GM12878 (cell line): ENCODE measurements at regions of chr20 and their contacts with region 1.

Region 1: DNA sequence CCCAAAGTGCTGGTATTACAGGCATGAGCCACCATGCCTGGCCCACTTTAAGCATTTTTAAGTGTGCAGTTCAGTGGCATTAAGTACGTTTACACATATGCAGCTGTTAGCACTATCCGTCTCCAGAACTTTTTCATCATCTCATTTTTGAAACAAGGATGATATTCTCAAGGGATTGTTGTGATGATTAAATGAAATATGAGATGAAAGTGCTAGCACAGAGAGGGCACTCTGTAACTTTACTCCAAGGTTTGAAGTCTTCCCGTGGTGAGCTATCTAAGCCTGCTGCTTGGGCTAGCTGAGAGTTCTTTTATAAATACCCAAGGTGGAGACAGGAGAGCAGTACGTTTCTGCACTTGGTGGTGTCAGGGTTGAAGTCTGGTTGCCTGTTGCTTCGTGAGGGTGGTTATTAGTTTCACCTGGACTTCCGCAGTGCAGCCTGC is 6.6 kb downstream of the TM9SF4 start:
- DNase-seq: no peak
- ATAC-seq: no peak
- H3K4me3 ChIP-seq: no peak overlapping the region
- H3K27ac ChIP-seq: no peak overlapping the region
- H3K4me1 ChIP-seq: peaks cover 14% of the 10 kb centered on the region
- H3K27me3 ChIP-seq: no peaks in the 10 kb centered on the region
- CTCF ChIP-seq: no peak
- EP300 ChIP-seq: no peak
- POLR2A ChIP-seq: no peak
- RAD21 ChIP-seq: no peak

Region 2: DNA sequence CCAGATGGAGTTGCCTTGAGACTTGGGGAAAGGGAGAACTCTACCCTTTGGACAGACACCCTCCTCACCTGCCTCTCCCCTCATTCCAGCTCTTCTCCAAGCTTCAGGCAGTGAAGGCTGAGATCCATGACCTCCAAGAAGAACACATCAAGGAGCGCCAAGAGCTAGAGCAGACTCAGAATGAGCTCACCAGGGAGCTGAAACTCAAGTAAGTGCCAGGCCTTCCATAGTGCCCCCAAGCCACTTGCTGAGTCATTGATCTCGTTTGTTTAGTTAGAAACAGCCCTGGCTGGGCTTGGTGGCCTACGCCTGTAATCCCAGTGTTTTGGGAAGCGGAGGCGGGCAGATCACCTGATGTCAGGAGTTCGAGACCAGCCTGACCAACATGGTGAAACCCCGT is 200.6 kb after region 1 on chr20:
- CTCF ChIA-PET with region 1: no interaction called
- POLR2A ChIA-PET with region 1: interaction called, 13 read pairs
- RAD21 ChIA-PET with region 1: no interaction called
- SMC1A ChIA-PET with region 1: no interaction called
- in situ Hi-C with region 1: no loop called
- intact Hi-C with region 1: no loop called
- DNase-seq: no peak
- ATAC-seq: no peak
- H3K4me3 ChIP-seq: no peak overlapping the region
- H3K27ac ChIP-seq: no peak overlapping the region
- H3K4me1 ChIP-seq: no peaks in the 10 kb centered on the region; the same call in 1 of the 2 replicates
- H3K27me3 ChIP-seq: no peaks in the 10 kb centered on the region
- CTCF ChIP-seq: no peak
- EP300 ChIP-seq: no peak
- POLR2A ChIP-seq: no peak
- RAD21 ChIP-seq: no peak